Right lobe of liver (tissue), 6 donors: ENCODE measurements at regions of chr20 and their contacts with region 1.

Region 1: GRCh38 chr20:63682384-63683139 is 13.9 kb upstream of the TNFRSF6B start:
- DNase-seq: peak in 1 of 3 donors; percentile 50
- ATAC-seq: peak; percentile 10 to 52 (median 30)
- H3K4me3 ChIP-seq: no peak overlapping the region
- H3K27ac ChIP-seq: peak overlapping the region in 2 of 3 donors; percentile 40 to 60
- H3K4me1 ChIP-seq: no peaks in the 10 kb centered on the region
- H3K27me3 ChIP-seq: no peaks in the 10 kb centered on the region
- CTCF ChIP-seq: no peak
- POLR2A ChIP-seq: no peak

Region 2: DNA sequence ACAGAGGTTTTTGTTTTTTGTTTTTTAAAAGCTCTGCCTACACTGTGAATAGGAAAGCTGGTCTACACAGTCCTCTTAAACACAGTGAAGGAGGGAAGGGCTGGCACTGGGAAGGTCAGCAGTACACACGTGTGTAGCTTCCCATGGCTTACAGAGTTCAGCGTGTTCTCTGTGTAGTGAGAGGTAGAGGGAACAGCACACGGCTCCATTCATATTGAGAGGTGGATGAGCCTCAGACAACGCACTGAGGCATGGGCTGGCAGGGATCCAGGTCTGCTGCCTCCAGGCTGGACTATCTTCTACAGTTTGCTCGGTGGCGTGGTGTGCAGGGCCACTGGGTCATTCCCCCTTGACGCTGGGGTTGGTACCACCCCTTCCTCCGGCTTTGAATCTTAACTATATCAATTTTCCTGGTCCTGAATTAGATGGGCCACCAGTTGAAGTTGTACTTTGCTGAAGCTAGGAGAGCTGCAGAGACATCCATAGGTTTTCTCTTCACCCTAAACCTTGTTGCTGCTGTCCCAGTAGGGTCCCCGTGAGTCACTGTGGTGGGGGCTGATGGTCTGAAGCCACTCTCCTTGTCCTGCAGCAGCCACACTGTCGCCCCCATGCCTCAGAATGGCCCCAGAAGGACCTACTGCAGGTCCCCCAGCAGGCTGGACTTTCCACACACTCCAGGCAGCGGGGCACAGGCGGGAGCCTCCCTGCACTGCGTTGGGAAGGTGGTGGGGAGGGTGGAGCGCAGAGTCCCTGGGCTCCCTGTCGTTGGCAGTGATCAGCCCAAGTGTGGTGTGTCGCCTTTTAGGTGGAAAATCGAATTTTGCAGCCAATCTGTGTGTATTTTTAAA is 408.0 kb before region 1 on chr20:
- intact Hi-C with region 1: loop called in 1 of 2 experiments (anchors 5 kb)
- DNase-seq: no peak
- ATAC-seq: no peak
- H3K4me3 ChIP-seq: no peak overlapping the region
- H3K27ac ChIP-seq: no peak overlapping the region
- H3K4me1 ChIP-seq: peaks cover 0 to 13% (median 6%) of the 10 kb centered on the region in 4 donors
- H3K27me3 ChIP-seq: no peaks in the 10 kb centered on the region
- CTCF ChIP-seq: no peak
- POLR2A ChIP-seq: no peak